ENCODE measurements at regions of chr2 and their contacts with region 1.

Region 1: DNA sequence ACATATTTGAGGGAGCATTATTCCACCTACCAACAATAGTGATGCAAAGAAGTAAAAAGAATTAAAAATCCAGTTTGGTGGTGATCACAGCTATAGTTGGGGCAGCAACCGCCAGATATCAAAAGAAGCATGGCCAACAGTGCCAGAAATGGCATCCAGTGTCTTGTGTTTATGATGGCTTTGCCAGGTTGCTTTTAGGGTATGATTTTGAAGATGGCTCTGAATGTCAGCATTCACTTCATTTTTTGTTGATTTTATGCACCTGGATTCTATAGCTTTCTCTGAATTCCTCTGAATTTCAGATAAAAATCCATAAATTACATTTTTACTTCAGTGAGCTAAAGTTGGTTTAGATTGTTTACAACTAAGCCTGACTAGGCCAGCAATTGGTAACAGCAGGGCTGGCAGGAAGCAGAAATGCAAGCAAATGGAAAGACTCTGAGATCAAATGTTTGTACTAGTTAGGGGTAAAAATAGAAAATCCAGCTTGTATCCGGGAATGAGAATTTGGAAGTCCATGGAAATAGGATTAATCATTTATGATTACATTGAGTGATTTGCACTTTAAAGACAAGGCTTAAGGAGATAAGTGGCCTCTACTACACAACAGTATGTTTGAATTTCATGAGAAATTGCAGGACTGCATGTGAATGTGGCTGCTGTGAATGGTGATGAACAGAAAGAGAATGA is 40.4 kb downstream of the COL3A1 start:
- DNase-seq: peak; percentile 65
- H3K4me3 ChIP-seq: no peak overlapping the region
- H3K27ac ChIP-seq: no peak overlapping the region
- H3K4me1 ChIP-seq: peaks cover 6% of the 10 kb centered on the region
- H3K27me3 ChIP-seq: no peaks in the 10 kb centered on the region
- CTCF ChIP-seq: no peak
- POLR2A ChIP-seq: no peak

Region 2: GRCh38 chr2:188940171-188940570 is 74.4 kb before region 1 on chr2:
- CTCF ChIA-PET with region 1: no interaction called
- POLR2A ChIA-PET with region 1: no interaction called
- dilution Hi-C with region 1: no loop called
- intact Hi-C with region 1: no loop called
- DNase-seq: peak; percentile 86
- H3K4me3 ChIP-seq: no peak overlapping the region
- H3K27ac ChIP-seq: no peak overlapping the region
- H3K4me1 ChIP-seq: peaks cover 5% of the 10 kb centered on the region
- H3K27me3 ChIP-seq: no peaks in the 10 kb centered on the region
- CTCF ChIP-seq: no peak
- POLR2A ChIP-seq: no peak

Region 3: DNA sequence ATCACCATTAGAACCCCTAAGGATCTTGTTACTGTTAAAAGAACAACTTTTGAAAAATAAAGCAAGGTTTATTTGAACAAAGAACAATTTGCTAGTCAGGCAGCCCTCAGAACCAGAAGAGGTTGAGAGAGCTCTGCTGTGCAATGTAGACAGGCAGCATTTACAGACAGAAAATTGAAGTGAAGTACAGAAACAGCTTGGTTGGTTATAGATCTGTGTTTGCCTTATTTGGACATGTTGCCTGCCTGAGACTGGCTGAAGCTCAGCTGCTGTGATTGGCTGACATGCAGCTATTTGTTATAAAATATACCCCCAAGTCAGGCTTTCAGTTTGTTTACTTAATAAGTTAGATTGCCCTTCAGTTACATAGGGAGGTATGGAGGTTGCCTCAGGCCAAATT is 1035.4 kb after region 1 on chr2:
- CTCF ChIA-PET with region 1: no interaction called
- POLR2A ChIA-PET with region 1: no interaction called
- dilution Hi-C with region 1: no loop called
- intact Hi-C with region 1: loop called (anchors 5 kb)
- DNase-seq: no peak
- H3K4me3 ChIP-seq: no peak overlapping the region
- H3K27ac ChIP-seq: no peak overlapping the region
- H3K4me1 ChIP-seq: no peaks in the 10 kb centered on the region
- H3K27me3 ChIP-seq: peaks cover 2 to 12% of the 10 kb centered on the region in 2 experiments
- CTCF ChIP-seq: no peak
- POLR2A ChIP-seq: no peak

Measured in endothelial cell of umbilical vein (primary cell).